Mucosa of descending colon (tissue), 3 donors: ENCODE measurements at regions of chr2 and their contacts with region 1.

Region 1: GRCh38 chr2:43484323-43484930 is 111.4 kb downstream of the THADA start:
- DNase-seq: peak in 1 of 3 donors; percentile 31
- ATAC-seq: peak; percentile 58
- H3K4me3 ChIP-seq: no peak overlapping the region
- H3K4me1 ChIP-seq: peaks cover 8% of the 10 kb centered on the region
- CTCF ChIP-seq: peak; percentile 18

Region 2: DNA sequence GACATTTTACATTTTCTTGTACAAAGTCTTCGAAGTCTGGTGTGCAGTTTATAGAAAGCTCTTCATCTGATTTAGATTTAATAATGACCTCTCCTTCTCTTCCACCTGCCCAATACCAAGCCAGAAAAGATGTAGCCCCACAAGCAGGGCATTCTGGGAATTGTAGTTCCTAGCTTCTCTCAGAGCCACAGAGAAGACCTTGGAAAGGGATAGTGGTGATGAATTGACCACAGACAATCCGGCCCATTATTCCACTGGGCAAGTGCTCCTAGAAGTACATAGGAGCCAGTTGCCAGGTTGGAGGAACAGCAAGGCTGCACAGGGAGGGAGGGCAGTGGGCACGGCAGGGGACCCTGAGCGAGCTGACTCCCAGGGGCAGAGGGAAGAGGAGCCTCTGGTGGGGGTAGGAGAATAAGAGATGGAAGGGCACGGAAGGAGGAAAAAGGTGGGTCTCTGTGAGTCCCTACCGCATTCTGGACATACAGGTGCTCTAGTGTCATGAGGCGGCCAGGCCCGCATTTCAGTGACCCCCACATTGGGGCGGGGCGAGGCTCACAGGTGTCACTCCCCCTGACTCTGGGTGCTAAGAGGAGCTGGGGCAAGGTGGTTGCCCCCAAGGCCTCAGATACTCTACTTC is 539.5 kb before region 1 on chr2:
- intact Hi-C with region 1: loop called in 1 of 2 experiments (anchors 10 kb)
- DNase-seq: no peak
- ATAC-seq: no peak
- H3K4me3 ChIP-seq: no peak overlapping the region
- H3K4me1 ChIP-seq: peaks cover 12% of the 10 kb centered on the region
- CTCF ChIP-seq: no peak

Region 3: DNA sequence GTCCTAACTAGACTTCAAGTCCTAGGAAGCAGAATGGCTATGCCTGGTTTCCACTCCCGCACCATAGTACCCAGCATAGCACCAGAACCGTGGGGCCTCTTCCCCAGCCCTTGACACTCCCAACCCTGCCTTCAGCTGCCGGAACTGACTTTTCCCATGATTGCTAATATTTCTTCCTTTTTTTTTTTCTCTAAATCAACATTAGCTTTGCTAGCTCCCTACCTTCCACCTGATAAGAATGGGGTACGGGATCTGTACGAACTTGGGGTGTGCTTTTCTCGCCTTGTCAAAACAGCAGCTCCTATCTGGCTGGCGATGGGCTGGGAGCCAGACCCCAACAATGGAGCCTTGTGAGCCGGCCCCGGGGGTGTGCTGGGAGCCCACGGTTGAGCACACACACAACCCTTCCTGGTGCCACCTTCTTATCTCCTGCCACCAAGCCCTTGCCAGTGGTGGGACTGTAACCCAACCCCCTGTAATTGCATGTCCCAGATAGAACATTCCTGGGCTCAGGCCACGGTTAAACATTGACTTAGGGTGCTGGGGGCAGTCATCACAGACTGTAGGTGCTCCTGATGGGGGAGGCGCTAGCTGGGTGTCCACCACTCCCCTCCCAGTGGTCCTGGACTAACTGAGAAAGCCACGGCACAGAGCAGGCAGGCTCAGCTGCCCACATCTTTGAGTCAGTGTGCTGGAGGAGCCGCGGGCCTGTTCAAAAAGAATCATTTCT is 479.0 kb before region 1 on chr2:
- intact Hi-C with region 1: no loop called
- DNase-seq: peak; percentile 83 to 88 (median 85)
- ATAC-seq: peak; percentile 88
- H3K4me3 ChIP-seq: no peak overlapping the region
- H3K4me1 ChIP-seq: peaks cover 27% of the 10 kb centered on the region
- CTCF ChIP-seq: no peak

Region 4: DNA sequence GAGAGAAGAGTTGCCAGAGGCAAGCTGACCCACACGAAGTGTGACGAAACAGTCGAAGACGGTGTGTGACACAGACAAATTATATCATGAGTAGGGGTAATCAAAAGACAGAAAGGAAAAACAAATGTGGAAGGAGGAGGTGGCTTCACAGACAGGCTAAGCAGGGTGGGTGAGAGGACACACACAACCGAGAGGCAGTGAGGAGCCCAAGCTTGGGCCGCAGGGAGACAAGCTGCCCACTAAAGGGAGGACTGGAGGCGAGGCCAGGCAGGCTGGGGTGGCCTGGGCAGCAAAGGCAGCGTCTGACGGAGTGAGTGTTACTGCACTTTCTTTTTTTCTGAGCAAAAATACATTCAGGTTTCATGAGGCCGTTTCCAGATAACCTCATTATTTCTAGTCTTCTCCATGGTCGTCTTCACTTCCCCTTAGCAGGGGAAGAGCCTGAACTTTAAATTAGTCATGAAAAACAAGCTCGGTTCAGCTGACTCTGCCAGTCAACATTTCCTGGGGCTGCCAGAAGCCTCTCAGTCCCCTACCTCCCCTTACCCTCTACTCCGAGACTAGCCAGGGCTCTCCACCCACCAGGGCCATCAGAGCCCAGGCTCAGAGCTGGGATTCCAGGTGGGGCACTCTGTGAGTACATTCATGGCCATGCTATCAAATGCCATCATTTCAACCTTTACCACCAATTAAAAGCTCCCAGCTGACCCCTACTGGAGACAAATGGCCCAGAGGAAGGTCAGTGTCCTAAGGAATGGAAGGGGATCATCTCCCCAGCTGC is 244.3 kb before region 1 on chr2:
- intact Hi-C with region 1: loop called in 1 of 2 experiments (anchors 10 kb)
- DNase-seq: no peak
- ATAC-seq: peak; percentile 45
- H3K4me3 ChIP-seq: no peak overlapping the region
- H3K4me1 ChIP-seq: no peaks in the 10 kb centered on the region
- CTCF ChIP-seq: no peak